Posterior vena cava (tissue), 2 donors: ENCODE measurements at regions of chr4 and their contacts with region 1.

Region 1: GRCh38 chr4:7540654-7541413 is 106.1 kb upstream of the PSAPL1 start:
- DNase-seq: no peak

Region 2: GRCh38 chr4:7500404-7500803 is 40.4 kb before region 1 on chr4:
- intact Hi-C with region 1: loop called in 1 of 2 experiments (anchors 1 kb)
- DNase-seq: no peak